ENCODE measurements at regions of chr9 and their contacts with region 1.

Region 1: DNA sequence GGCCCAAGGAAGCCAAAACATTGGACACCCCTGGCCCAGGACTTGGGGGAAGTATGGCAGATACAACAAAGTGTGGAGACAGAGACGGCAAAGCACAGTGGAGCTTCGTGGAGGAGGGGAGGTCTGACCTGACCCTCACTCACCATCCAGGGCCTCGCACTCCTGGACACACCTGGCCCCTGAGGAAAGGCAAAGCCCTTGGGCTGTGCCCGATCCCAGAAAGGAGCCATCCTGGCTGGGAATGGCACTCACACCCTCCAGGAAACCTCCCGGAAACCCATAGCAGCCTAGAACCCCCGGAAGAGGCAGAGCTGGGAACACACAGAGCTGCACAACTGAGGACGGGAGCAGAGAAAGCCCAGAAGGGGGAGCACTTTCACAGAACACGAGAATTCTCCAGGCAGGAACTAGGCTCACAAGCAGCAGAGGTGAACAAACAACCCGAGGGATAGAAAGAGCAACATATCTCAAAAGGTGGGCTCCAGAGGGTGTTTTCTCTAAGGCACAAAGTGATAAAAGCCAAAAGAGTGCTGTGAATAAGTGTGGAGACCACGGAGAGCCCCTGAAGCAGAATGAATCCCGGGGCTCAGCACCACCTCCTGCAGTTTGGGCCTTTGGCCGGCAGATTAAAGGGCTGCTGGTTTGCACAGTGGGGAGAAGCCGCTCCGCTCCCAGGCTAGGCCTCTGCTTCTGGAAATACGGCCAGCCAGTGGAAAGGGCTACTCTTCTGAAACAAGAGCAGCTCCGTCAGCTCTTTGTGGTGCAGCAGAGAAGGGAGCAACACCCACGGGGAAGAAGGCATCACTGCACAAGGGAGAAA is 108.2 kb downstream of the UBE2R2 start:
- DNase-seq: peak; percentile 76
- H3K4me3 ChIP-seq: no peak overlapping the region
- H3K27ac ChIP-seq: peak overlapping the region; percentile 4
- H3K4me1 ChIP-seq: peaks cover 11% of the 10 kb centered on the region
- CTCF ChIP-seq: peak; percentile 92

Region 2: DNA sequence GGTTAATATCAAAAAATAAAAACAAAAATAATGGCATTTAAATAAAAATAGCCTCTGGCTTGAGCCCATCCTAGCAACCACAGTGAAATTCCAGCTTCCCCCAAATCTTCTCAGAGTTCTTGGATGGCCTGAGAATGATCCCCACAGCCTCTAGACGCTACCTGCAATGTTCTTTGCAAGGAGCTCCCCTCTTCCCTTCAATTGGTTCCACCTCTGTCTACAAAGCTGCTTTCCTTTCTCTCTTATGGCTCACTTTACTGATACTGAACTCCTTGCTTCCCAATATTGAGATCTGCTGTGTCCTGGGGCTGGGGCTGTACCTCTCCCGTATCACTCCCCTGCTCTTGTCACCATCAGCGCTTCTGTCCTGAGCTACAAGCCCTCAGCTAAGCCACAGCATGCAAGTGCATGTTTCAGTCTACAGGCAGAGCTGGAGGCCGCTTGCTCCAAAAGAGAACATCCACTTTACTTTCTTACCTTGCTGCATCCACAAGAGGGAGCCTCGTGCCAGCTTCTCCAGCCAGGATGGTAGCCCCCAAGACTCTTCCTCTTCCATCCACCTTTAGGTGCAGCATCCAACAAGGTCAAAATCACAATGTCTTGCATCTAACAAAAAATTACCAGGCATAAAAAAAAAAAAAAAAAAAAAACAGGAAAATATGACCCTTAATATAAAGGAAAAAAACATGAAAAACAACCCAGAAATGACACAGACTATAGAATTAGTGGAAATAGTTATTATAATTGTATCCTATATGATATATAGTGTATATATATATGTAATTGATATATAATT is 187.2 kb before region 1 on chr9:
- CTCF ChIA-PET with region 1: no interaction called
- POLR2A ChIA-PET with region 1: no interaction called
- intact Hi-C with region 1: loop called (anchors 5 kb)
- DNase-seq: peak; percentile 54
- H3K4me3 ChIP-seq: no peak overlapping the region
- H3K27ac ChIP-seq: no peak overlapping the region
- H3K4me1 ChIP-seq: no peaks in the 10 kb centered on the region
- CTCF ChIP-seq: peak; percentile 80

Region 3: DNA sequence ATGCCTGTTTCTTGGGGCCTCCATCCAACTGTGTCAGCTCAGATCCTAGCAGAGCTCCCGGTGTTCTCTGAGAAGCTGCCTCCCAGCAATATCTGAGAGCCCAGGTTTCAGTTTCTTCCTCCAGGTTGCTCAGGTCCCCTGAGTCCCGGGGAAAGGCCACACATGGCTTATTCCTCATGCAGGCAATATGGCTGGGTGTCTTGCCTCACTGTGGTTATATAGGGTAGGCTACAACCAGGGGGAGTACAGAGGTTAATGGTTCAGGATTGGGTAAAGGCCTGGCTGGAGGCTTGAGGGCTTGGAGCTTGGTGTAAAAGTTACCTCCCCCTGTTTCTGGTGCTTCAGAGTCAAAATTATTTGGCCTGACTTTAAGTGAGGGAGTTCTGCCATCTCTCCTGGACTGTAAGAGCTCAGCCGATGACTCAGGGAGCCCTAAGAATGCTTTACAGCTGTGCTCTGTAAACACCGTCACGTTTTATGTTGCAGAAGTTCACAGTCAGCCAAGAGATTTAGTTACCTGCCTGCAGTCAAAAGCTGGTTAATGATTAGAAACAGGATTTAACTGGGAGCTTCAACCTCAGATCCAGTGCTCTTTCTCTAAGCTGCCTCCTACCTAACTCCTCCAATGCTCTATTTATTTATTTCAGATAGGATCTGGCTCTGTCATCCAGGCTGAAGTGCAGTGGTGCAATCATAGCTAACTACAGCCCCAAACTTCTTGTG is 147.8 kb after region 1 on chr9:
- CTCF ChIA-PET with region 1: interaction called, 3 read pairs
- POLR2A ChIA-PET with region 1: interaction called, 7 read pairs
- intact Hi-C with region 1: loop called (anchors 10 kb)
- DNase-seq: no peak
- H3K4me3 ChIP-seq: no peak overlapping the region
- H3K27ac ChIP-seq: no peak overlapping the region
- H3K4me1 ChIP-seq: peaks cover 3% of the 10 kb centered on the region
- CTCF ChIP-seq: no peak

Region 4: GRCh38 chr9:34252670-34253459 is 327.7 kb after region 1 on chr9:
- CTCF ChIA-PET with region 1: no interaction called
- POLR2A ChIA-PET with region 1: no interaction called
- intact Hi-C with region 1: loop called (anchors 2 kb)
- DNase-seq: peak; percentile 65
- H3K4me3 ChIP-seq: no peak overlapping the region
- H3K27ac ChIP-seq: no peak overlapping the region
- H3K4me1 ChIP-seq: no peaks in the 10 kb centered on the region
- CTCF ChIP-seq: peak; percentile 87